ENCODE measurements at regions of chr17 and their contacts with region 1.

Region 1: DNA sequence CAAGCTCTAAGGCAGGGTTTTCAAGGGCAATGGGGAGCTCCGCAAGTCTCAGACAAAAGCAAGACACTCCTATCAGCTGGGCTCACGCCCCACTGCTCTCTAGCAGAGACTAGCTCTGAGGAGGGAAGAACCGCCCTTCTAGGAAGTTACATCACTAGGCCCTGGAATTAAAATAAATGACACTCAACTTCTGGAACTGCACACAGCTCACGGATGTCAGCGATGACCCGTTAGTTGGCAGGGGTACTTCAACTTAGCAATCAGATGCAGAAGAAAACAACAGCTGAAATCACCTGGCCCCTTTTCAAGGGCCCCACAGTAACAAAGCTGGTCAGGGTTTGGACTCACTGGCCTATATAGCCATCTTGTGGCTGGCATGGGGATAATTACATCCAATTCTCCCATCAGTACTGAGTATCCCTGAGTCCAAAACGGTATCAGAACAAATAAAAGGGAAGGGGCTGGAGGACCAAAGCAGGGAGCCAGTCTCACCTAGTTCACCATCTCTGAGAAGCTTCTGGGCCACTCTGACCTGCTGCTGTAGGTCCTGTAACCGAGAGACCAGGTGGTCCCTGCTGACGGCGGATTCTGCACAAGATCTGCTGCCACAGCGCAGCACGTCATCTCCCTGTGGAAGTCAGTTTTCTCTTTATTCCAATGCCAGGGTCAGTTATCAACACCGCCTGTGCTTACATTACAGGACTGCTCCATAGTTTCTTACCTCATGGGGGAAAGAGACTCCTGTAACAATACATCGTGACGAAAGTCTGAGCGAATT is 22.2 kb downstream of the SERPINF1 start:
- DNase-seq: no peak
- H3K4me3 ChIP-seq: no peak overlapping the region
- H3K27ac ChIP-seq: peak overlapping the region; percentile 38
- H3K4me1 ChIP-seq: peaks cover 30% of the 10 kb centered on the region
- H3K27me3 ChIP-seq: no peaks in the 10 kb centered on the region
- CTCF ChIP-seq: peak; percentile 62 to 74 (median 73)

Region 2: DNA sequence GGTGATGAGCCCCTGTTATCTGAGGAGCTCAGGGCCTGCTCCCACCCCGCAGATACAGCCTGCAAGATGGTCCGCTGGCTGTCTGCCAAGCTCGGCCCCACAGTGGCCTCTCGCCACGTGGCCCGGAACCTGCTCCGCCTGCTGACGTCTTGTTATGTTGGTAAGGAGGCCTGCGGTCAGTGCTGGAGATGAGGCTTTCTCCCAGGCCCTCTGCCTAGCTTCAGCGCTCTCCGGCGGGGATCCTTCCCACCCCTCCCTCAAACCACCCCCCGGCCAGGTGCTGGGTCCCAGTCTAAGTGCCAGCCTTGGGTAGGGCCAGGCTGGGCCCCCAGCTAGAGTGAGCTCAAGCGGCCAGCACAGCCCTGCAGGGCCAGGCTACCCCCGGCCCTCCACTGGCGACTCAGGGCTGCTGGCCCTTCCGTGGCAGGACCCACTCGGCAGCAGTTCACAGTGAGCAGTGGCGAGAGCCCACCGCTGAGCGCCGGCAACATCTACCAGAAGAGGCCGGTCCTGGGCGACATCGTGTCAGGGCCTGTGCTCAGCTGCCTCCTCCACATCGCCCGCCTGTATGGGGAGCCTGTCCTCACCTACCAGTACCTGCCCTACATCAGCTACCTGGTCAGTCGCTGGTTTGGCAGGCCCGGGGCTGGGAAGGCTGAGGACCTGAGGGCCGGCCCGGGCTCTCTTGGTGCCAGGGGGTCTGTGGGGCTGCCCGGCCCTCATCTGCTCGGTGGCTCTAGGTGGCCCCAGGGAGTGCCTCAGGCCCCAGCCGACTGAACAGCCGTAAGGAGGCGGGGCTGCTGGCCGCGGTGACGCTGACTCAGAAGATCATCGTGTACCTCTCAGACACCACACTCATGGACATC is 53.5 kb before region 1 on chr17:
- dilution Hi-C with region 1: loop called (anchors 5 kb)
- DNase-seq: no peak
- H3K4me3 ChIP-seq: no peak overlapping the region
- H3K27ac ChIP-seq: peak overlapping the region; percentile 60
- H3K4me1 ChIP-seq: peaks cover 14% of the 10 kb centered on the region
- H3K27me3 ChIP-seq: no peaks in the 10 kb centered on the region
- CTCF ChIP-seq: no peak

Region 3: GRCh38 chr17:1847191-1847590 is 63.2 kb after region 1 on chr17:
- dilution Hi-C with region 1: loop called (anchors 5 kb)
- DNase-seq: no peak
- H3K4me3 ChIP-seq: no peak overlapping the region
- H3K27ac ChIP-seq: no peak overlapping the region
- H3K4me1 ChIP-seq: no peaks in the 10 kb centered on the region
- H3K27me3 ChIP-seq: no peaks in the 10 kb centered on the region
- CTCF ChIP-seq: no peak